GM12878 (cell line): ENCODE measurements at regions of chr3 and their contacts with region 1.

Region 1: DNA sequence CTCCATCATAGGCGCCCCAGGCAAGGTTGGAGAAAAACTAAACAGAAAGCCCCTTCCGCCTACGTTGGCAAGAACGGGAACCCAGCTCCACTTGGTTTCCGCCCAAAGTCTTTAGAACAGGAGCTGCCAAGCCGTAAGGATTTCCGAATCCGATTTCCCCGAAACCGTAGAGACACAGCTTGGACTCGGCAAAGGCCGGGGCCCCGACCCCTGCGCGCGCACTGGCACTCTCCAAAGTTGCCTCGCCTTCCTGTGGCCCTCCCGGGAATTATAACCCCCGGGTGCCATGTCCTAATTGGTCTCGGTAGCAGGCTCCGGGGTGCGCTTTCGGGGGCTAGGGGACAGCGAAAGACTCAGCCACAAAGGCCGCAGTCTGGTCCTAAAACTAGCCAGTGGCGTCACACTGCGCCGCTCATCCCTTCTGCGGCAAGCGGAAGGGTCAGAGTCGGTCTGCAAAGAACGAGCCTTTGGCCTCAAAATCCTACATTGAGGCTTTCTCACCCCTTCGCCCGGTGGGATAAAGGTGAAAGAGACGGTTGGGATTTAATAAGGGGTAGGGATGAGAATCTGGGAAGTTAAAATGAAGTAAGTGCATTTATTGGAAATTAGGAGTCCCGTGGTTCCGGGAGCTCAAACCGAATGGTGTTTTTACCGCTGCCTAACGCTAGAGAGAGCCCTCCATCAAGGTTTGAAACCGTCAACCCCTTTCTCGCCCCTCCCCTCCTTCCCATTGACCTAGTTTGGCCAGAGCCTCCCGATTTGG is 6.8 kb downstream of the BCL6 start:
- DNase-seq: no peak
- ATAC-seq: peak; percentile 76
- H3K4me3 ChIP-seq: peak overlapping the region; percentile 50; the same call in 1 of the 2 replicates
- H3K27ac ChIP-seq: no peak overlapping the region
- H3K4me1 ChIP-seq: no peaks in the 10 kb centered on the region; the same call in 1 of the 2 replicates
- H3K27me3 ChIP-seq: peaks cover 12 to 19% of the 10 kb centered on the region in 2 experiments
- CTCF ChIP-seq: peak; percentile 77 to 84 (median 84)
- EP300 ChIP-seq: no peak
- POLR2A ChIP-seq: no peak
- RAD21 ChIP-seq: peak; percentile 88

Region 2: DNA sequence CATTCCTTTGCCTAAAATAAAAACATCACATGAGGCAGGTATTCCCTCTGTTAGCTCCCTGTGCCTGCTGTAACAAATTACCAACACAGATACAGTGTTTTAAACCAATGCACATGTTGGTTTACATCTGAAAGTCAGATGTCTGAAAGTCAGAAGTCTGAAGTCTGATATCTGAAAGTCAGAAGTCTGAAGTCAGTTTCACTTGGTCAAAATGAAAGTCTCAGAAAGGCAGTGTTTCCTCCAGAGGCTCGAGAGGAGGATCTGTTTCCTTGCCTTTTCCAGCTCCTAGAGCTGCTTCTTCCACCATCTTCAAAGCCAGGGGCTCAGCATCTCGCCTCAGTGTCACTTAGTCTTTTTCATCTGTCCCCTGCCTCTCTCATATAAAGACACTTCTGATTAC is 90.3 kb before region 1 on chr3:
- CTCF ChIA-PET with region 1: no interaction called
- POLR2A ChIA-PET with region 1: no interaction called
- RAD21 ChIA-PET with region 1: no interaction called
- SMC1A ChIA-PET with region 1: no interaction called
- in situ Hi-C with region 1: no loop called
- intact Hi-C with region 1: no loop called
- DNase-seq: peak; percentile 1
- ATAC-seq: peak; percentile 78
- H3K4me3 ChIP-seq: no peak overlapping the region
- H3K27ac ChIP-seq: no peak overlapping the region
- H3K4me1 ChIP-seq: peaks cover 4% of the 10 kb centered on the region; the same call in 1 of the 2 replicates
- H3K27me3 ChIP-seq: peaks cover 2 to 6% of the 10 kb centered on the region in 2 experiments; a peak in 3 of 4 replicates
- CTCF ChIP-seq: no peak
- EP300 ChIP-seq: no peak
- POLR2A ChIP-seq: no peak
- RAD21 ChIP-seq: no peak

Region 3: GRCh38 chr3:187719628-187720336 is 18.7 kb before region 1 on chr3:
- CTCF ChIA-PET with region 1: interaction called, 17 read pairs
- POLR2A ChIA-PET with region 1: no interaction called
- RAD21 ChIA-PET with region 1: no interaction called
- SMC1A ChIA-PET with region 1: interaction called, 3 read pairs
- in situ Hi-C with region 1: no loop called
- intact Hi-C with region 1: no loop called
- DNase-seq: no peak
- ATAC-seq: no peak
- H3K4me3 ChIP-seq: no peak overlapping the region
- H3K27ac ChIP-seq: no peak overlapping the region
- H3K4me1 ChIP-seq: no peaks in the 10 kb centered on the region
- H3K27me3 ChIP-seq: no peaks in the 10 kb centered on the region
- CTCF ChIP-seq: no peak
- EP300 ChIP-seq: no peak
- POLR2A ChIP-seq: no peak
- RAD21 ChIP-seq: no peak

Region 4: GRCh38 chr3:188139466-188139865 is 401.0 kb after region 1 on chr3:
- CTCF ChIA-PET with region 1: interaction called, 11 read pairs
- POLR2A ChIA-PET with region 1: no interaction called
- RAD21 ChIA-PET with region 1: no interaction called
- SMC1A ChIA-PET with region 1: interaction called, 3 read pairs
- in situ Hi-C with region 1: no loop called
- intact Hi-C with region 1: loop called (anchors 5 kb)
- DNase-seq: no peak
- ATAC-seq: no peak; the same call in 2 of the 3 replicates
- H3K4me3 ChIP-seq: no peak overlapping the region
- H3K27ac ChIP-seq: no peak overlapping the region
- H3K4me1 ChIP-seq: no peaks in the 10 kb centered on the region
- H3K27me3 ChIP-seq: no peaks in the 10 kb centered on the region
- CTCF ChIP-seq: no peak
- EP300 ChIP-seq: no peak
- POLR2A ChIP-seq: no peak
- RAD21 ChIP-seq: no peak

Region 5: DNA sequence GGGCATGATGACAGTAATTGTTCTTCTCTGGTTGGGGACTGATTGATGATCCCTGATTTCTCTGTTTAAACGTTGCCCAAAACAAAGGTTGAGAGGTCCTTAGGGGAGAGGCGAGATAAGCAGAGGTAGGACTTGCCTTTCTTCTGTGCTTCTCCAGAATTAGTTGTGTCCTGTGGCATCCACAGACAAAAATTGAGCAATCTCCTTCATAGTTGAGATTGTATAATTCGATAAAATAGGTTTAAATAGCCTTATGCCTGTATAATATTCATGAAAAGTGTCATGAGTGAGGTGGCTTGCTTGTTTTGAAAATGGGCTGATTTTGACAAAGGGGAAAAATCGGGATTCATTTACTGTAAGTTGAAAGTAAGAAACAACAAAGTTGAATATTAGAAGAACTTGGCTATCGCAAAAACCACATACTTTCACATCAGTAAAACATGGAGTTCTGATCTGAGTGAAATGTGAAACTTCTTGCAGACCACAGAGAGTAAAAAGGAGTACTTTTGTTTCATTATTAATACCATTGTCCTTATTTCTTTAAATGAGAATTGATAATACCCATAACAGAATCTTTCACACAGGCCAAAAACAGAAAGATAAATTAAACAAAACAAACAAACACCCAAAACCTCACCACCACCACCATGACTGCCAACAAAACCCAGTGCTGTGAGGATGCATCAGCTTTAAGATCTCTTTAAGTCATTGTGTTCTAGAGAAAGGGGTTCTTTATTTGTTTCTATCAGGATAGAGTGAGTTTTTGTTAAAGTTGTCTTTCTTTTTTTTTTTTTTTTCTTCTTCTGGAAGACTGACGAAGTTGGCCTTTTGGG is 571.1 kb after region 1 on chr3:
- CTCF ChIA-PET with region 1: interaction called, 4 read pairs
- POLR2A ChIA-PET with region 1: no interaction called
- RAD21 ChIA-PET with region 1: no interaction called
- SMC1A ChIA-PET with region 1: interaction called, 3 read pairs
- in situ Hi-C with region 1: no loop called
- intact Hi-C with region 1: loop called (anchors 5 kb)
- DNase-seq: peak; percentile 54
- ATAC-seq: peak; percentile 89
- H3K4me3 ChIP-seq: no peak overlapping the region
- H3K27ac ChIP-seq: no peak overlapping the region
- H3K4me1 ChIP-seq: peaks cover 10% of the 10 kb centered on the region; the same call in 1 of the 2 replicates
- H3K27me3 ChIP-seq: peaks cover 0 to 8% of the 10 kb centered on the region in 2 experiments; a peak in 1 of 4 replicates
- CTCF ChIP-seq: no peak
- EP300 ChIP-seq: peak; percentile 68 to 77; a peak in 3 of 4 replicates
- POLR2A ChIP-seq: no peak
- RAD21 ChIP-seq: no peak

Region 6: GRCh38 chr3:188664795-188665194 is 926.3 kb after region 1 on chr3:
- CTCF ChIA-PET with region 1: interaction called, 12 read pairs
- POLR2A ChIA-PET with region 1: no interaction called
- RAD21 ChIA-PET with region 1: interaction called, 5 read pairs
- SMC1A ChIA-PET with region 1: interaction called, 5 read pairs
- in situ Hi-C with region 1: no loop called
- intact Hi-C with region 1: loop called (anchors 10 kb)
- DNase-seq: no peak
- ATAC-seq: peak; percentile 46; the same call in 2 of the 3 replicates
- H3K4me3 ChIP-seq: no peak overlapping the region
- H3K27ac ChIP-seq: no peak overlapping the region
- H3K4me1 ChIP-seq: no peaks in the 10 kb centered on the region
- H3K27me3 ChIP-seq: no peaks in the 10 kb centered on the region
- CTCF ChIP-seq: peak; percentile 21 to 40 (median 24); a peak in 5 of 6 replicates
- EP300 ChIP-seq: no peak
- POLR2A ChIP-seq: no peak
- RAD21 ChIP-seq: peak; percentile 26; the same call in 1 of the 2 replicates

Region 7: DNA sequence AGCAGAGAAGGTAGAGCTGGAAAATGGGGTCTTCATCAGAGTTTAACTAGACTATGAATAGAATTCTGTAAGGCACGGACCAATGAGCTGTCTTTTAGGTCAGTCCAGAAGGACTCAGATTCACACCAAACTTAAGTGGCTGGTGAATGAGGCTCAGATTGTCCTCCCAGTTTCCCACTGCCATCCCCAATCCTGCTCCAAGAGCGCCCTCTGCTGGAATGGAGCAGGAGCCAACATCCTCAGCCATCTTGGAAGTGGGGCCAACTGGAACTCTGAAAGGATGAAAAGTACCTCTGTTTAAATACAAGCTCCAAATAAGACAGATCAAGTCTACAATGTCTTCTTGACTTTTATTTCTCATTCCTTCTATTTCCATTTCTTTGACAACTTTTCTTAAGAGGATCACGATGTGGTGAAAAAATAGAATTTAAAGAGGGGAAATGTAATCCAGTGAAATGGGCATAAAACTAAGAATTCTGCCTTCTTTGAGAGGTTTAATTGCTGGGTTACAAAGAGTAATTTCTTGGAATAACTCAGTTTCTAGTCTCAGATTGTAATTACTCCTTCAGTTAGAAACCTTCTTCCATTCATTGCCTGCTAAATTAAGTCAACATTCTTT is 1216.2 kb after region 1 on chr3:
- CTCF ChIA-PET with region 1: interaction called, 437 read pairs
- POLR2A ChIA-PET with region 1: interaction called, 3 read pairs
- RAD21 ChIA-PET with region 1: interaction called, 130 read pairs
- SMC1A ChIA-PET with region 1: interaction called, 118 read pairs
- in situ Hi-C with region 1: loop called (anchors 5 kb)
- intact Hi-C with region 1: loop called (anchors 1 kb)
- DNase-seq: peak; percentile 3
- ATAC-seq: peak; percentile 79
- H3K4me3 ChIP-seq: no peak overlapping the region
- H3K27ac ChIP-seq: no peak overlapping the region
- H3K4me1 ChIP-seq: no peaks in the 10 kb centered on the region
- H3K27me3 ChIP-seq: peaks cover 0 to 2% of the 10 kb centered on the region in 2 experiments; a peak in 1 of 4 replicates
- CTCF ChIP-seq: peak; percentile 77 to 82 (median 79)
- EP300 ChIP-seq: no peak
- POLR2A ChIP-seq: no peak
- RAD21 ChIP-seq: peak; percentile 95

Region 8: DNA sequence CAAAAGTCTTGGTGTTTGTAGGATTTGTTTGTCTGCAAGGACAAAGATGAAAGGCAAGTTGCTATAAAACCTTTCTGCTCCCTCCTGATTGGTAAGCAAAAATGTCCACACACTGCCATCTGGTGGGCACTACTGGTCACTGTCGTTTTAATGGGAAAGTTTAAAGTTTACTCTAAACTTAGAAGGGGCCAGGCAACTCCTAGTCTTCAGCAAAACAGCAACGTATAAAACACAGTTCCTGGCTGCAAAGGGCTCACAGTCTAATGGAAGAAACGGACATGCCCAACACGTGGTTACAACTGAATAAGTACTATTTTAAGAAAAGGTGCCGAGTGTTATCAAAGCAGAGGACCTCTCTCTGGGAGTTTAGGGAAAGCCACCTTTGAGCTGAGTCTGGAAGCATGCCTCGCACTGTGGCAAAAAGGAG is 1409.6 kb after region 1 on chr3:
- CTCF ChIA-PET with region 1: interaction called, 32 read pairs
- POLR2A ChIA-PET with region 1: no interaction called
- RAD21 ChIA-PET with region 1: interaction called, 4 read pairs
- SMC1A ChIA-PET with region 1: interaction called, 4 read pairs
- in situ Hi-C with region 1: loop called (anchors 5 kb)
- intact Hi-C with region 1: loop called (anchors 1 kb)
- DNase-seq: no peak
- ATAC-seq: peak; percentile 87
- H3K4me3 ChIP-seq: no peak overlapping the region
- H3K27ac ChIP-seq: no peak overlapping the region
- H3K4me1 ChIP-seq: no peaks in the 10 kb centered on the region
- H3K27me3 ChIP-seq: peaks cover 0 to 5% of the 10 kb centered on the region in 2 experiments; a peak in 2 of 4 replicates
- CTCF ChIP-seq: peak; percentile 59 to 75 (median 73)
- EP300 ChIP-seq: no peak
- POLR2A ChIP-seq: no peak
- RAD21 ChIP-seq: peak; percentile 80